Spleen (tissue), 13 donors: ENCODE measurements at regions of chr1 and their contacts with region 1.

Region 1: GRCh38 chr1:66271216-66271903 is 262.6 kb upstream of the SGIP1 start:
- DNase-seq: no peak
- H3K4me3 ChIP-seq: no peak overlapping the region
- H3K27ac ChIP-seq: peak overlapping the region in 7 of 8 donors; percentile 67 to 82 (median 75)
- H3K4me1 ChIP-seq: peaks cover 19 to 86% (median 48%) of the 10 kb centered on the region in 6 donors
- H3K27me3 ChIP-seq: no peaks in the 10 kb centered on the region
- CTCF ChIP-seq: no peak
- POLR2A ChIP-seq: no peak

Region 2: GRCh38 chr1:66084442-66084841 is 186.9 kb before region 1 on chr1:
- intact Hi-C with region 1: no loop called
- DNase-seq: no peak
- H3K4me3 ChIP-seq: no peak overlapping the region
- H3K27ac ChIP-seq: no peak overlapping the region
- H3K4me1 ChIP-seq: no peaks in the 10 kb centered on the region
- H3K27me3 ChIP-seq: no peaks in the 10 kb centered on the region
- CTCF ChIP-seq: no peak
- POLR2A ChIP-seq: no peak

Region 3: GRCh38 chr1:66327588-66327987 is 56.2 kb after region 1 on chr1:
- intact Hi-C with region 1: loop called (anchors 10 kb)
- DNase-seq: no peak
- H3K4me3 ChIP-seq: peak overlapping the region in 1 of 8 donors; percentile 35
- H3K27ac ChIP-seq: peak overlapping the region in 7 of 8 donors; percentile 18 to 96 (median 55)
- H3K4me1 ChIP-seq: peaks cover 16 to 73% (median 48%) of the 10 kb centered on the region in 6 donors
- H3K27me3 ChIP-seq: no peaks in the 10 kb centered on the region
- CTCF ChIP-seq: no peak
- POLR2A ChIP-seq: no peak